GM12878 (cell line): ENCODE measurements at regions of chr12 and their contacts with region 1.

Region 1: DNA sequence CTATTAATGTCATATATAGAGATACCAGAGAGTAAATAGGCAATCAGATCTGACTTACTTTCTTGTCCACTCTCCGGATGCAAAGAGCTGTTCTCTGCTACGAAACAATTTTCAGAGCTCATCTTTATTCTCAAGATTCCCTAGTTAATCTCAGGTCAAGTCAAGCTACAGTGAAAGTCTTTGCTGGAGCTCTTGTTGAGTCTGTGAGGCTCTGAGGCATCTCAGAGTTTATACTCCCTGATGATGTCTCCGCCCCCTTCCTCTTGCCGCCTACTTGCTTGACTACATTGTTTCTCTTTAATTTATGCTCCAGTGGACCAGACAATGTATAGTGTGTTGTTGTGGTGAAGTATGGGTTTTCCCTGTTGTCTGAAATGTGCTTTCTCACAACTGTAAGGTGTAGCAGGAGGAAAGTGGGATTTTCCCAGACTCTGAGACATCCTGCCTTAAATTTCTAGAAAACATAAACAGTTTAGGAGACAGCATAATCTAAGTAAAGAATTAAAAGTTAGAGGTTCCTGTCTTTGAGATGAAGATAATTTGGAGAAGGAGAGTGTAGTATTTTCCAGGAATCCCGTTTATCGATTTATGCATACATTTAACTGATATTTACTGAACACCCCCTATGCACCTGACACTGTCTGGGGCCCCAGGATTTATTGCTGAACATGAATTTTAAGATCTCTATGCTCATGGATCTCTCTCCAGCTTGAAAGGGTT is at the start of gene CD69:
- DNase-seq: peak; percentile 95
- ATAC-seq: peak; percentile 64
- H3K4me3 ChIP-seq: peak within 1 kb of the TSS; percentile 87
- H3K27ac ChIP-seq: peak within 1 kb of the TSS; percentile 76
- H3K4me1 ChIP-seq: peaks cover 18% of the 10 kb centered on the region
- H3K27me3 ChIP-seq: no peaks in the 10 kb centered on the region
- CTCF ChIP-seq: no peak
- EP300 ChIP-seq: peak; percentile 62 to 68; a peak in 3 of 4 replicates
- POLR2A ChIP-seq: peak; percentile 94
- RAD21 ChIP-seq: no peak
- polyA plus RNA-seq, gene CD69: 32.9 to 55.7 TPM

Region 2: DNA sequence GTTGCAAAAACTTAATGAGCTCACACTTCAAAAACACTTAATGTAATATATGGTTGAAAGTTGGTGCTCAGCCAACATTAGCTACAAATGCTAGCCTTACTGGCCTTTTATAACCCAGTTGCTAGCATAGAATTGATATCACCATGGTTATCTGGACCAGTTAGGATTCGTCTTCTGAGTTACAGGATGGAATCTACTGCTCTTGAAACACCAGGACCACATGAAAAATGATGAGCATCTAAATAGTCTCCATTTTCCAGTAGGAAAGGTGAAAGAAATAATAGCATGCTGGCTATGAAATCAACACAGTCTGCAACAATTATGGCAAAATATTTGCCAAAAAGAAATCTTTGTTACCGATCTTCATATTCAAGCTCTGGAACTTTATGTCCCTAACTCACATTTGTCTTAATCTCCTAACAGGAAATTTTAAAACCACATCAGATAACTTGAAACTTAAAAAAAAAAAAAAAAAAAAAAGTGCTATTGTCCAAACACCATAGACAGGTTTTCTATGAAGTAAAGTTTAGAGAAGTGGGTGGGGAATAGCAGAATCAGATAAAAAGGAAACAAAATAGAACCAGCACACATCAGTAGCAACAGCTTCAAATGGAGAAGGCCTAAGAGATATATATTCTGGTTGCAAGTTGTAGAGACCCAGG is 12.5 kb after region 1 on chr12:
- CTCF ChIA-PET with region 1: interaction called, 14 read pairs
- POLR2A ChIA-PET with region 1: interaction called, 18 read pairs
- RAD21 ChIA-PET with region 1: interaction called, 134 read pairs
- SMC1A ChIA-PET with region 1: interaction called, 24 read pairs
- in situ Hi-C with region 1: no loop called
- intact Hi-C with region 1: no loop called
- DNase-seq: no peak
- ATAC-seq: no peak
- H3K4me3 ChIP-seq: no peak overlapping the region
- H3K27ac ChIP-seq: no peak overlapping the region
- H3K4me1 ChIP-seq: peaks cover 7% of the 10 kb centered on the region; the same call in 1 of the 2 replicates
- H3K27me3 ChIP-seq: no peaks in the 10 kb centered on the region
- CTCF ChIP-seq: no peak
- EP300 ChIP-seq: no peak
- POLR2A ChIP-seq: no peak
- RAD21 ChIP-seq: no peak

Region 3: GRCh38 chr12:9843416-9843815 is 82.6 kb after region 1 on chr12:
- CTCF ChIA-PET with region 1: no interaction called
- POLR2A ChIA-PET with region 1: no interaction called
- RAD21 ChIA-PET with region 1: no interaction called
- SMC1A ChIA-PET with region 1: no interaction called
- in situ Hi-C with region 1: no loop called
- intact Hi-C with region 1: no loop called
- DNase-seq: no peak
- ATAC-seq: no peak
- H3K4me3 ChIP-seq: no peak overlapping the region
- H3K27ac ChIP-seq: no peak overlapping the region
- H3K4me1 ChIP-seq: no peaks in the 10 kb centered on the region
- H3K27me3 ChIP-seq: no peaks in the 10 kb centered on the region
- CTCF ChIP-seq: no peak
- EP300 ChIP-seq: no peak
- POLR2A ChIP-seq: no peak
- RAD21 ChIP-seq: no peak